ENCODE measurements at regions of chr17 and their contacts with region 1.

Region 1: GRCh38 chr17:47615766-47616424 is 33.8 kb upstream of the KPNB1 start:
- DNase-seq: no peak
- H3K4me3 ChIP-seq: no peak overlapping the region
- H3K27ac ChIP-seq: peak overlapping the region in 1 of 8 donors; percentile 26
- H3K4me1 ChIP-seq: peaks cover 0 to 8% (median 2%) of the 10 kb centered on the region in 6 donors
- H3K27me3 ChIP-seq: no peaks in the 10 kb centered on the region
- CTCF ChIP-seq: peak; percentile 67 to 89 (median 77)
- POLR2A ChIP-seq: no peak

Region 2: GRCh38 chr17:47229535-47230443 is 386.1 kb before region 1 on chr17:
- intact Hi-C with region 1: loop called (anchors 10 kb)
- DNase-seq: peak; percentile 86
- H3K4me3 ChIP-seq: peak overlapping the region in 2 of 8 donors; percentile 22 to 55
- H3K27ac ChIP-seq: no peak overlapping the region
- H3K4me1 ChIP-seq: peaks cover 17 to 44% (median 34%) of the 10 kb centered on the region in 6 donors
- H3K27me3 ChIP-seq: no peaks in the 10 kb centered on the region
- CTCF ChIP-seq: peak; percentile 74 to 98 (median 95)
- POLR2A ChIP-seq: peak in 1 of 3 donors; percentile 1

Region 3: DNA sequence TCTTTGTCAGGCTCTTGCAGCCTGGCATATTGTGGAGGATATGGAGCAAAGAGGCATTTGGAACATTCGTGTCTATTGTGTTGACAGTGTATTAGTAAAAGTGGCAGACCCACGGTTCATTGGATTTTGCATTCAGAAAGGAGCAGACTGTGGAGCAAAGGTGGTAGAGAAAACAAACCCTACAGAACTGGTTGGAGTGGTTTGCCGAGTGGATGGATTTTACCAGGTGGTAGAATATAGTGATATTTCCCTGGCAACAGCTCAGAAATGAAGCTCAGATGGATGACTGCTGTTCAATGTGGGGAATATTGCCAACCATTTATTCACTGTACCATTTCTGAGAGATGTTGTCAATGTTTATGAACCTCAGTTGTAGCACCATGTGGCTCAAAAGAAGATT is 247.6 kb before region 1 on chr17:
- intact Hi-C with region 1: loop called (anchors 10 kb)
- DNase-seq: no peak
- H3K4me3 ChIP-seq: no peak overlapping the region
- H3K27ac ChIP-seq: no peak overlapping the region
- H3K4me1 ChIP-seq: no peaks in the 10 kb centered on the region
- H3K27me3 ChIP-seq: no peaks in the 10 kb centered on the region
- CTCF ChIP-seq: no peak
- POLR2A ChIP-seq: no peak

Region 4: GRCh38 chr17:47840740-47841603 is 225.1 kb after region 1 on chr17 and contains the start of gene SCRN2:
- intact Hi-C with region 1: no loop called
- DNase-seq: peak; percentile 98
- H3K4me3 ChIP-seq: peak within 1 kb of the TSS; percentile 74 to 96 (median 82)
- H3K27ac ChIP-seq: peak within 1 kb of the TSS; percentile 65 to 84 (median 80)
- H3K4me1 ChIP-seq: peaks cover 21 to 75% (median 52%) of the 10 kb centered on the region in 6 donors
- H3K27me3 ChIP-seq: peaks cover 0 to 23% (median 0%) of the 10 kb centered on the region in 7 donors
- CTCF ChIP-seq: peak; percentile 97 to 99 (median 99)
- POLR2A ChIP-seq: no peak
- total RNA-seq, gene SCRN2: 37.5 to 59.4 (median 49.0) TPM